Activated CD4-positive, alpha-beta T cell treated with anti-CD3 and anti-CD28 coated beads, Interleukin-2, amount 10 ng/mL, durations not matched to agents 24 days and 14 days (primary cell): ENCODE measurements at regions of chr15 and their contacts with region 1.

Region 1: DNA sequence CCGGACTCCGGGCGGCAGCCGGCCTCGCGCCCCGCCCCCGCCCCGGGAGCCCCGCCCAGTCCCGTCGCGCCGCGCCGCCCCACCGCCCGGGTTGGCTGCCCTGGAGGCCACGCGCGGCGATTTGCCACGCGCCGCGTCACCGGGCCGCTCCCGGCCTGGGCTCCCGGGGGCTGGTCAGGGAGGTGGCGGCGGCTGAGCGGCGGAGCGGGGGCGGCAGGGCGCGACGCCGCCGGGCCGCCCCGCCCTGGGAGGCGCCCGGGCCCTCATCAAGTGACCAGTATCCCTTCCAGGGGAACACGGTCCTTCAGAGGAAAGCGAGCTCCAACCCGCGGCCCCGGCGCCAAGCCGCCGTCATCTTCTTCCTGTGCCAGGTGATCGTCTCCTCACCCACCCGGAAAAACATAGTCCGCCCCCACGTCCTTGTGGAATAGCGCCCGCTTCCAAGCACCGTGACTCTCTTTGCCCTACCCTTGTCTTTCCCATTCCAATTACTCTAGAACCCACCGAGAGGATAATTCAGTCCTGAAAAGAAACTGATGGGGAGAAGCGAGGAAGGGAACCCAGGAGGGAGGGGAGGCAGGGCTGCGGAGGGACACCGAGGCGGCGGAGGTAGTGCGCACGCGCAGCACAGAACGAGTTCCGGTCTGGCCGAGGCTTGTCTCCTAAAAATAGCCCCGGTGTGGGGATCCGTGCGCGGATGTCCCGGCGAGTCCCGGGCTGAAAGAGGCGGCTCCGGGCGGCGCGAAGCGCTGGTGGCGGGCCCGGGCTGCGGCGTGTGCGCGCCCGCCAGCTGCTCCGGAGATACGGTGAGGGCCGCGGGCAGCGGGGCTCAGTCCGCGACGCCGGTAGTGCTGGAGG is at the start of gene MEF2A:
- DNase-seq: peak; percentile 97
- H3K4me3 Mint-ChIP-seq: peak within 1 kb of the TSS; percentile 97
- H3K27ac Mint-ChIP-seq: peak within 1 kb of the TSS; percentile 96
- H3K4me1 Mint-ChIP-seq: peaks cover 27% of the 10 kb centered on the region
- H3K27me3 Mint-ChIP-seq: peaks cover 7% of the 10 kb centered on the region
- total RNA-seq, gene MEF2A: 24.7 and 25.3 TPM in 2 replicates

Region 2: GRCh38 chr15:99282121-99282520 is 283.4 kb before region 1 on chr15:
- intact Hi-C with region 1: loop called (anchors 5 kb)
- DNase-seq: peak; percentile 27
- H3K4me3 Mint-ChIP-seq: no peak overlapping the region
- H3K27ac Mint-ChIP-seq: peak overlapping the region; percentile 48
- H3K4me1 Mint-ChIP-seq: peaks cover 39% of the 10 kb centered on the region
- H3K27me3 Mint-ChIP-seq: no peaks in the 10 kb centered on the region

Region 3: DNA sequence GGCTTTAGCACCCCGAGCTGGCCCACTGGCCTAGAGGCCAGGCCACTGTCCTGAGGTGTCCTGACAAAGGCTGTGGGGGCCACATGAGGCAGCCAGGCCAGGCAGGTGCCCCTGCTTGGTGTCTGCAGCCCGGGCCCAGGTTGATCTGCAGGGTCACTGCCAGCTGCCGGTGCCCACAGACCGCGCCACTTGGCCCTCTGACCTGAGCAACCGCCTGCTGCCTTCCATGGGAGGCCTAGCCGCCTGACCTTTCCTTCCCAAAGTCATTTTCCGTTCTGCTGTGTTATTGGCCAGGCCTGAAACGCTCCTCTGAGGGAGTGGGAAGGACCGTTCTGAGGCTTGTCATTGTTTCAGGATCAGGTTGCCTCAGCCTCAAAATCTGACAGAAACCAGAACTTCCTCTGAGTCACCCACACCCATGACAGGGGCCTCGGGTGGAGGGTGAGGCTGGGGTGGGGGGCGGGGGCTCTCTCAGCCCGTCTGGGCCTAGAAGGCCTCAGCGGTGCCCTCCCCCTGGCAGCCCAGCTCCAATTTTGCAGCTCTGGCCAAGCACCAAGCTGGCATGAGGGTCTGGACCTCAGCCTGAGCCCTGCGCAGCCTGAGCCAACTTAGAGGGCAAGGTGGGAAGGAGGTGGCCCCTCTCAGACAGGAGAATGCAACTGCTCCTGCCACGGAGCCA is 140.4 kb before region 1 on chr15:
- intact Hi-C with region 1: loop called (anchors 2 kb)
- DNase-seq: peak; percentile 86
- H3K4me3 Mint-ChIP-seq: peak overlapping the region; percentile 29
- H3K27ac Mint-ChIP-seq: peak overlapping the region; percentile 88
- H3K4me1 Mint-ChIP-seq: peaks cover 49% of the 10 kb centered on the region
- H3K27me3 Mint-ChIP-seq: peaks cover 4% of the 10 kb centered on the region

Region 4: DNA sequence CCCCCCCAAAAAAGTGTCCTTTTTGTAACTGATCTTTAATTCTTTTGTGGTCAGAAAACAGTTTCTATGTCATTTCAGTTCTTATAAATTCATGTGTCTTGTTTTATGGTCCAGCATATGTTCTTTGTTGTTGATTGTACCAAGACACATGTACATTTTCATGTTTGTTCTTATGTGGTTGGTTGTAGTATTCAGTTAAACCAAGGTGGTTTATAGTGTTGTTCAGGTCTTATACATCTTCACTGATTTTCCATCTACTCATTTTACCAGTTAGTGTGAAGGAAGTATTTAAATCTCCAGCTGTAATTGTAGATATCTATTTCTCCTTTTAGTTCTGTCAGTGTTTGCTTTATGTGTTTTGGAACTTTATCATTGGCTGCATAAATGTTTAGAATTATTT is 24.3 kb after region 1 on chr15:
- intact Hi-C with region 1: loop called (anchors 2 kb)
- DNase-seq: no peak
- H3K4me3 Mint-ChIP-seq: no peak overlapping the region
- H3K27ac Mint-ChIP-seq: no peak overlapping the region
- H3K4me1 Mint-ChIP-seq: peaks cover 24% of the 10 kb centered on the region
- H3K27me3 Mint-ChIP-seq: no peaks in the 10 kb centered on the region

Region 5: DNA sequence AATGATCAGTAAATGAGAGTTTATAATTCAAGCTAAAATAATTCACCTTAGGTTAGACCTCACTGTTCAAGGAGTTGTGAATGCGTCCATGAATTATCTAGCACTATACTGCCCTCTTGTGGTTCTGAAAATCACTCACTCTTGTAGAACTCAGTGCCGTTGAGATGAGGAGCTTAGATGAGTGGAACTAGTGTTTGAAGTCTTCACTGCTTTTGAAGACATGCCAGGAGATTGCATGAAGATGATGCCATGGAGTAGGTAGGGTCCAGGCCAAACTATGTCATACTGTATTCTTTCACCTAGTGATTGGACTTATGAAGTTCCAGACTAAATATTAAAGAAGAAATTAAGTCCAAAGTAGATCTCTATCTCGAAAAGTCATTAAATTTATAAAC is 138.9 kb after region 1 on chr15:
- intact Hi-C with region 1: loop called (anchors 2 kb)
- DNase-seq: peak; percentile 89
- H3K4me3 Mint-ChIP-seq: no peak overlapping the region
- H3K27ac Mint-ChIP-seq: no peak overlapping the region
- H3K4me1 Mint-ChIP-seq: peaks cover 39% of the 10 kb centered on the region
- H3K27me3 Mint-ChIP-seq: no peaks in the 10 kb centered on the region